Heart right ventricle (tissue), 16 donors: ENCODE measurements at regions of chr9 and their contacts with region 1.

Region 1: DNA sequence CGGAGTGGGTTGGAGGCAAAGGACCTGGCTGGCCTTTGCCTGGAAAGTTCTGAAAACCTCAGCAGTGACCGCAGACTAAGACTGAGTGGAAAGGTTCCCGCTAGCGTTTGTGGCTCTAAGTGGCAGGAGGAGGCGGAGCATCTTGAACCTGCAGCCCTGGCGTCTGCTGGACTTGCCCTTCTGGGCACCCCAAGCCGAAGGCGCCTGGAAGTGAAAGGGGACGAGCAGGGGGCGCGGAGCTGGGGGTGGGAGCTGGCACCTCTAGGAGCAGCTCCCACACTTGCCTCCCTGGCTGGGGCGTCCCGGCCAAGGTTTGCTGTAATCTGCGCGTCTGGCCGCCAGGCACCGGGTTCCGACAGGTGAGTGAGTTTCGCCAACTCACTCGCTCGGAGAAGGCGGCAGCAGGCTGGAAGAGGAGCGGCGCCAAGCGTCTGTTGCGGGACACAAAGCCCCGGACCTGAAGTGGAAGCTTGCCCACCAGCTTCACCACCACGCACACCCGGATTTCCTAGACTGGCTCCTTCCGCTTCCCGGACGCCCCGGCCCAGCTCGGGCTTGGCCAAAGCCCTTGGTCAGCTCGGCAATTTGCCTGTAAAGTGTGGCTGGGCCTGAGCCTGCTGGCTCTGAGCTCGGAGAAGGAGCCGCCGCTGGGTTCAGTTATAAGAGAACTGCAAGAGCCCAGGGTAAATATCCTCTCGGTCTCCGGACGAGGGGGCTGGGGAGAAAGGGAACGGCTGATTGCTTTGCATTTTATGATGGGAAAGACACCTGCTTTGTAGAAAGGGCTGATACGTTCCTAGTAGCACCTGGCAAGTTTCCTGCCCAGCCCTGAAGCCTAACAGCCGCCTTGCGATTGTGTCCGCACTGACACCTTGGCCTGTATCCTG is at the start of gene GNA14:
- DNase-seq: peak; percentile 60 to 66
- ATAC-seq: peak; percentile 77 to 91 (median 82)
- H3K4me3 ChIP-seq: peak within 1 kb of the TSS; percentile 15 to 74 (median 62)
- H3K27ac ChIP-seq: peak within 1 kb of the TSS in 8 of 10 donors; percentile 54 to 84 (median 68)
- H3K4me1 ChIP-seq: peaks cover 0 to 34% (median 11%) of the 10 kb centered on the region in 9 donors
- H3K27me3 ChIP-seq: peaks cover 0 to 39% (median 15%) of the 10 kb centered on the region in 7 donors
- CTCF ChIP-seq: peak in 2 of 9 donors; percentile 27 to 28
- total RNA-seq, gene GNA14: 0.93 to 4.8 (median 1.8) TPM

Region 2: GRCh38 chr9:77456829-77457437 is 191.5 kb before region 1 on chr9:
- intact Hi-C with region 1: loop called in 9 of 10 experiments (anchors 5 to 10 kb)
- DNase-seq: peak; percentile 79 to 80
- ATAC-seq: peak; percentile 68 to 90 (median 84)
- H3K4me3 ChIP-seq: no peak overlapping the region
- H3K27ac ChIP-seq: no peak overlapping the region
- H3K4me1 ChIP-seq: peaks cover 0 to 17% (median 4%) of the 10 kb centered on the region in 9 donors
- H3K27me3 ChIP-seq: no peaks in the 10 kb centered on the region
- CTCF ChIP-seq: peak; percentile 74 to 96 (median 86)

Region 3: GRCh38 chr9:77514886-77515711 is 133.4 kb before region 1 on chr9:
- intact Hi-C with region 1: loop called in 1 of 10 experiments (anchors 10 kb)
- DNase-seq: peak in 1 of 2 donors; percentile 62
- ATAC-seq: peak; percentile 87 to 95 (median 92)
- H3K4me3 ChIP-seq: no peak overlapping the region
- H3K27ac ChIP-seq: peak overlapping the region; percentile 56 to 80 (median 66)
- H3K4me1 ChIP-seq: peaks cover 0 to 55% (median 21%) of the 10 kb centered on the region in 9 donors
- H3K27me3 ChIP-seq: no peaks in the 10 kb centered on the region
- CTCF ChIP-seq: no peak

Region 4: DNA sequence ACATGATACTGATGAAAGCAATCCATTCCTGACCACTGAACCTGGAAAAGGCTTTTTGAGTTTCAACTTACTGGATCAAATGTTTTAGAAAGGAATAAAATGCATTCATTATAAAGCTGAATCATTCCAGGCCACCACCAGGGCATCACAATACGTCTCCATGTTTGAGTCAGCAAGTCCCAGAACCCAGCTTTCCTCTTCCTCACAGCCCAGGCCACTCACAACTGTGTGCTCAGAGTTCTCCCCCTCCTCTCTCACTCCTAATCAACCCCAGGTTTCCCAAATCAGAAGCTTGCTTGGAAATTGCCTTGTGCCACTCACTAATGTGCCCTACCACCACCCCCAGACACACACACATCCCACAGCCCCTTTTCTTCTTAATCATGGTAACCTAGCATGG is 92.1 kb before region 1 on chr9:
- intact Hi-C with region 1: loop called in 1 of 10 experiments (anchors 10 kb)
- DNase-seq: no peak
- ATAC-seq: no peak
- H3K4me3 ChIP-seq: no peak overlapping the region
- H3K27ac ChIP-seq: no peak overlapping the region
- H3K4me1 ChIP-seq: peaks cover 0 to 1% (median 0%) of the 10 kb centered on the region in 9 donors
- H3K27me3 ChIP-seq: no peaks in the 10 kb centered on the region
- CTCF ChIP-seq: no peak

Region 5: DNA sequence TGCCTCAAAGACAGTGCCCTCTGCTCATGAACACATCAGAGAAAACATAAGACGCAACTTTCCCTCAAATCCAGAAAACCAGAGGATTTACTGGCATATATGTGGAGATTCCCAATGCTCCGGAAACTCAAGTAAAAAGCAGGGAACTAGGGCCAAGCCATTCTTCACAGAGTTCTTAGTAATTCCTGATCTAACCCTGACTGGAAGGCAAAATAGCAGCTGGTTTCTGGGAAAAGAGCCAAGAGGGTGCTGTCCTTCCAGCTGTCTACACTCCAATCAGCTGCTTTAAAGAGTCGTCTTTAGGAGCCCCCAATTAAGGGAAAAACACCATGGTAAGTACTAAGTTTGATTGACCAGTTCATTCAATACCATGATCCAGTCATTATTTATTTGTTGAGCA is 50.0 kb before region 1 on chr9:
- intact Hi-C with region 1: loop called in 5 of 10 experiments (anchors 5 to 10 kb)
- DNase-seq: peak in 1 of 2 donors; percentile 65
- ATAC-seq: peak; percentile 67 to 89 (median 76)
- H3K4me3 ChIP-seq: no peak overlapping the region
- H3K27ac ChIP-seq: peak overlapping the region in 8 of 10 donors; percentile 21 to 71 (median 58)
- H3K4me1 ChIP-seq: peaks cover 3 to 61% (median 45%) of the 10 kb centered on the region in 9 donors
- H3K27me3 ChIP-seq: no peaks in the 10 kb centered on the region
- CTCF ChIP-seq: no peak

Region 6: GRCh38 chr9:77605449-77606220 is 42.8 kb before region 1 on chr9:
- intact Hi-C with region 1: loop called in 1 of 10 experiments (anchors 5 kb)
- DNase-seq: no peak
- ATAC-seq: peak in 1 of 8 donors; percentile 49
- H3K4me3 ChIP-seq: peak overlapping the region in 1 of 10 donors; percentile 7
- H3K27ac ChIP-seq: peak overlapping the region in 9 of 10 donors; percentile 24 to 87 (median 66)
- H3K4me1 ChIP-seq: peaks cover 0 to 20% (median 6%) of the 10 kb centered on the region in 9 donors
- H3K27me3 ChIP-seq: no peaks in the 10 kb centered on the region
- CTCF ChIP-seq: no peak

Region 7: DNA sequence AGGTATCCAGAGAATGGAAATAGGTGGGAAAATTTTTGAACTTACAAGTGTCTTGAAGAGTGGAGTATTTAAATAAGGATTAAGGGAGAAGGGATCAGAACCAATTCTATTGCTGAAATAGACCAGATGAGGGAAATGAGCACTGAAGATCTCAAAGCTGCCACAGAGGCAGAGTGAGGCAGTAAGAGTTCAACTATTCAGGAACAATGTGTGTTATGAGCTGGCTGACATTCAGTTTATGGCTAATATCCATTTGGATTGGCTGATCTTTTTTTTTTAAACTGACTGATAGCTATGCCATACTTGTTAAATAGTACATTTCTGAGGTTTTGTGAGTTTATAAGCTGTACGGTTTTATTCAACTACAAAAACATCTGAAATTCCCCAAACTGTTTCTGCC is 94.9 kb after region 1 on chr9:
- intact Hi-C with region 1: loop called in 1 of 10 experiments (anchors 5 kb)
- DNase-seq: no peak
- ATAC-seq: no peak
- H3K4me3 ChIP-seq: no peak overlapping the region
- H3K27ac ChIP-seq: no peak overlapping the region
- H3K4me1 ChIP-seq: peaks cover 0 to 15% (median 3%) of the 10 kb centered on the region in 9 donors
- H3K27me3 ChIP-seq: no peaks in the 10 kb centered on the region
- CTCF ChIP-seq: no peak